Head of caudate nucleus (tissue), 42 donors: ENCODE measurements at regions of chr1 and their contacts with region 1.

Region 1: GRCh38 chr1:3727042-3727824 is 25.0 kb upstream of the CCDC27 start:
- DNase-seq: peak in 40 of 42 donors; percentile 30 to 85 (median 64)

Region 2: DNA sequence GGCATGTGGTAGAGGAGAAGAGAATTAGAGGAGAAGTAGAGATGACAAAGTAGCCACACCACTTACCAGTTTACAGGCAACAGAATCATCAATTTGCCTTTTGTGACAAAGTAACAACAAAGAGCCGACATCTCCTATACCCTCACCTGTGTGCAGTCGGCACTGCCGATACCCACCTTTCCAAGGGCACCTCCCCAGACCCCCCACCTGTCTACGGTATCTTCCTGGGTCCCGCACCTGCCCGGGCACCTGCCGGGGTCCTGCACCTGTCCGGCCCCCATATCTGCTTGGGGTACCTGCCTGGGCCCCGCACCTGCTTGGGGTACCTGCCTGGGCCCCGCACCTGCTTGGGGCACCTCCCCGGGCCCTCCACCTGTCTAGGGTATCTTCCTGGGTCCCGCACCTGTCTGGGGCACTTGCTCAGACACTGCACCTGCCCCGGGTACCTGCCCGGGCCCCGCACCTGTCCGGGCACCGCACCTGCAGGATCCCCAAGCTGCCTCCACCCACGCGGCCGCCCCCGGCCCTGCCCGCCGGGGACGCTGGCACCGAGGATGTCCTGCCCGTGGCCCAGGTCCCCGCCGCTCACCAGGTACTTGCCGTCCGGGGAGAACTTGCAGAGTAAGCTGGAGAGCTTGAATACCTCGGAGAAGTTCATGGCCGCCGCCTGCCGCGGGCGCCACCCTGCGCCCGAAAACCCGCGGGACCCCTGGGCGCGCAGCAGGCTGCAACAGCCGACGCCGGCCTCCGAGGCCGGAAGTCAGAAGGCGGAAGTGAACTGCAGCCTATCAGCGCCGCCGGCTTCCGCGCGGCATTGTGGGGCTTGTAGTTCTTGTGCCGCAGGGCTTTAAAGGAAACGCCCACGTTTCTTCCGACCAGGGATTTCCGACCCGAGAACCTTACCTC is 77.6 kb before region 1 on chr1 and contains the start of gene WRAP73:
- intact Hi-C with region 1: loop called (anchors 10 kb)
- DNase-seq: peak; percentile 75 to 95 (median 90)

Region 3: GRCh38 chr1:3695326-3696217 is 31.7 kb before region 1 on chr1:
- intact Hi-C with region 1: loop called (anchors 2 kb)
- DNase-seq: peak; percentile 31 to 88 (median 70)

Region 4: DNA sequence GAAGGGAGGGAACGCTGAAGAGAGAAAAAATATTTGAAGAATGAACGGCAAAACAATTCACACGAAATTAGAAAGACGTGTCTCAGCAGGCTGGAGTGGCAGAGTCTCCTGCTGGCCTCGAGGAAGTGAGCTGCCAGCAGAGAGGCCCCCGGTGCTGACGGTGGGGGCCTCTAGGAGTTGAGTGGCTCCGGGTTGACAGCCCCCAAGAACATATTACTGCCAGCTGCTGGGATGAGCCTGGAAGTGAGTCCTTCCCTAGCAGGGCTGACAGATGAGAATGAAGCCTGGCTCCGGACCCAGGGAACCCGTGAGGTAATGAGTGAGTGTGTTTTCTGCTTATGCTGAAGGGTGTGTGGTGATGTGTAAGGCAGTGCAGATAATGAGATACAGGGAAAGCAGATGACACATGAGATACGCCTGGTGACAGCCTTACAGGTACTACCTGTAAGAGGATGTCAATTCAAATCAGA is 92.5 kb after region 1 on chr1:
- intact Hi-C with region 1: no loop called
- DNase-seq: peak in 20 of 42 donors; percentile 10 to 72 (median 36)

Region 5: GRCh38 chr1:4306559-4307467 is 579.6 kb after region 1 on chr1:
- intact Hi-C with region 1: no loop called
- DNase-seq: peak in 1 of 42 donors; percentile 20